B cell (primary cell): ENCODE measurements at regions of chr18 and their contacts with region 1.

Region 1: GRCh38 chr18:9614401-9615279 is at the start of gene PPP4R1:
- DNase-seq: peak; percentile 83
- ATAC-seq: peak; percentile 70
- H3K4me3 ChIP-seq: peak within 1 kb of the TSS; percentile 50 to 81 (median 67)
- H3K4me3 Mint-ChIP-seq: peak within 1 kb of the TSS; percentile 93
- H3K27ac ChIP-seq: peak within 1 kb of the TSS; percentile 75 to 76
- H3K27ac Mint-ChIP-seq: peak within 1 kb of the TSS; percentile 92
- H3K4me1 ChIP-seq: peaks cover 15 to 16% of the 10 kb centered on the region in 2 donors
- H3K4me1 Mint-ChIP-seq: peaks cover 24% of the 10 kb centered on the region
- H3K27me3 ChIP-seq: no peaks in the 10 kb centered on the region
- H3K27me3 Mint-ChIP-seq: no peaks in the 10 kb centered on the region
- CTCF ChIP-seq: no peak
- total RNA-seq, gene PPP4R1: 57.1 and 65.0 TPM in 2 replicates

Region 2: GRCh38 chr18:8608795-8609658 is 1005.6 kb before region 1 on chr18 and contains the start of gene RAB12:
- CTCF ChIA-PET with region 1: no interaction called
- POLR2A ChIA-PET with region 1: no interaction called
- intact Hi-C with region 1: loop called (anchors 10 kb)
- DNase-seq: peak; percentile 90
- ATAC-seq: peak; percentile 83
- H3K4me3 ChIP-seq: peak within 1 kb of the TSS; percentile 40 to 88 (median 76)
- H3K4me3 Mint-ChIP-seq: peak within 1 kb of the TSS; percentile 91
- H3K27ac ChIP-seq: peak within 1 kb of the TSS; percentile 42 to 72
- H3K27ac Mint-ChIP-seq: peak within 1 kb of the TSS; percentile 87
- H3K4me1 ChIP-seq: peaks cover 60 to 62% of the 10 kb centered on the region in 2 donors
- H3K4me1 Mint-ChIP-seq: peaks cover 72% of the 10 kb centered on the region
- H3K27me3 ChIP-seq: no peaks in the 10 kb centered on the region
- H3K27me3 Mint-ChIP-seq: no peaks in the 10 kb centered on the region
- CTCF ChIP-seq: peak; percentile 73
- total RNA-seq, gene RAB12: 38.7 and 40.9 TPM in 2 replicates

Region 3: DNA sequence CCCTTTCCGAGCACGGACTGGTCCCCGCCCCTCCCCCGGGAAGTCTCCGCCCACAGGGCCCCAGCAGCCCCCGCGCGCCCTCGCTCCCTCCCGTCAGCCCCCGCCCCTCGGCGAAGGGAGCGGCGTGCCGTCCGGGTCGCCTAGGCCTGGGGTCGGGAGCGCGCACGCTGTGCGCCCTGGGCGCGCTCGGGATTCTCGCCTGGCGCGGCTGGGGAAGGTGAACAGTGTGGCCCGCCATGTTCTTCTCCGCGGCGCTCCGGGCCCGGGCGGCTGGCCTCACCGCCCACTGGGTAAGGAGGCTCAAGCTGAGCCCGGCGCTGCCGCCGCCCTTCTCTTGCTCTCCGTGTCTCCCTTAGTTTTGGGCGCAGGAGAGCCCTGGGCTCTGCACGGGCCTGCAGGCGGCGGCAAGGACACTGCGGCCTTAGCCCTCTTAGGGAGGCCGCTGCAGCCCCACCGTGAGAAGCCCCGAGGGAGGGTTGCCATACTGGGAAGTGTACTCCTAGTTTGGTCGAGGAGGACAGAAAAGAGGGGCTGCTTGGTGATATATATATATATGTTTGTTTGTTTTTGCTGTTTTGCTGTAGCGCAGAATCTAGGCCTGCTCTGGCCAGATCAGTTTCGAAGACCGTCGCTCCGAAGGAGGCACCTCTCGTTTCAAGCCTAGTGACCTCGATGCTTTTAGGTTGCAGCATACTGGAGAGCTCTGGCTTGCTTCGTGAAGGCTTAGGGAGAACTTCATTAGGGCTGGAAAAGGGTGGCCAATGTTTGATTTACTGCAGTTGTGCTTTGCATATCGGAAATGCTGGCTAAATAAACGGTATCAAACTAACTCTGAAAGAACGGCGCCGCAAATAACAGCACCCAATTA is 511.9 kb before region 1 on chr18 and contains the start of gene NDUFV2:
- CTCF ChIA-PET with region 1: no interaction called
- POLR2A ChIA-PET with region 1: no interaction called
- intact Hi-C with region 1: loop called (anchors 2 kb)
- DNase-seq: peak; percentile 96
- ATAC-seq: peak; percentile 96
- H3K4me3 ChIP-seq: peak within 1 kb of the TSS; percentile 77 to 98 (median 88)
- H3K4me3 Mint-ChIP-seq: peak within 1 kb of the TSS; percentile 95
- H3K27ac ChIP-seq: peak within 1 kb of the TSS; percentile 80 to 86
- H3K27ac Mint-ChIP-seq: peak within 1 kb of the TSS; percentile 93
- H3K4me1 ChIP-seq: peaks cover 43 to 50% of the 10 kb centered on the region in 2 donors
- H3K4me1 Mint-ChIP-seq: peaks cover 54% of the 10 kb centered on the region
- H3K27me3 ChIP-seq: no peaks in the 10 kb centered on the region
- H3K27me3 Mint-ChIP-seq: no peaks in the 10 kb centered on the region
- CTCF ChIP-seq: no peak
- total RNA-seq, gene NDUFV2: 135 and 137 TPM in 2 replicates

Region 4: GRCh38 chr18:9334329-9334972 is 280.2 kb before region 1 on chr18 and contains the start of gene TWSG1:
- CTCF ChIA-PET with region 1: no interaction called
- POLR2A ChIA-PET with region 1: no interaction called
- intact Hi-C with region 1: loop called (anchors 2 kb)
- DNase-seq: peak; percentile 94
- ATAC-seq: peak; percentile 93
- H3K4me3 ChIP-seq: peak within 1 kb of the TSS; percentile 59 to 88 (median 71)
- H3K4me3 Mint-ChIP-seq: peak within 1 kb of the TSS; percentile 95
- H3K27ac ChIP-seq: peak within 1 kb of the TSS in 1 of 2 donors; percentile 65
- H3K27ac Mint-ChIP-seq: peak within 1 kb of the TSS; percentile 82
- H3K4me1 ChIP-seq: peaks cover 6 to 19% of the 10 kb centered on the region in 2 donors
- H3K4me1 Mint-ChIP-seq: peaks cover 20% of the 10 kb centered on the region
- H3K27me3 ChIP-seq: peaks cover 0 to 2% (median 0%) of the 10 kb centered on the region in 4 experiments
- H3K27me3 Mint-ChIP-seq: peaks cover 3% of the 10 kb centered on the region
- CTCF ChIP-seq: peak; percentile 44
- total RNA-seq, gene TWSG1: 5.5 and 6.3 TPM in 2 replicates

Region 5: DNA sequence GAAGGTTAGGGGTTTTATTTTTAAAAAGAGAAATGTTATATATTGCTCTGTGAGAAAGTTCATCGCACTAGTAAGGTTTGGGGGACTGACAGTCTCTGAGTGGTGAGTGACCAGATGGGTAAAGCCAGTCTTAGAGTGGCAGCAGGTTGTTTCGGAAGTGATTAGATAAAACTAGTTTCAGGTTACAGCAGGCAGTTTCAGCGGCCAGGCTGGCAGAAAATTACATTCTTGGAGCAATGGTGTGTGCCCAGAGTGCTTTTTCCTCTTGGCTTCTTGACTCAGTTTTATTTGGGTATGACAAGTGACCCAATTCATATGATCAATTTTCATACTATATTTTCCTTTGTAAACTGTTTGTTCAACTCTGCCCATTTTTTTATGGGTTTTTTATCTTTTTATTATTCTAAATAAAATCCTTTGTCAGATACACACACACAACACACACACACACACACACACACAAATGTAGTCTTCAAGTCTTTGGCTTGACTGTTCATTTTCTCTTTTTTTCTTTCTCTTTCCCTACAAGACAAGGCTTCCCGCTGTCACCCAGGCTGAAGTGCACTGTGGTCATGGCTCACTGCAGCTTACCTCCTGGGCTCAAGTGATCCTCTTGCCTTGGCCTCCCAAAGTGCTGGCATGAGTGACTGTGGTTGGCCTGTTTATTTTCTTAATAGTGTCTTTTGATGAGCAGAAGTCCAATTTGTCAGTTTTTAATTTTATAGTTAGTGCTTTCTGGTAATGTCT is 108.4 kb before region 1 on chr18:
- CTCF ChIA-PET with region 1: no interaction called
- POLR2A ChIA-PET with region 1: no interaction called
- intact Hi-C with region 1: no loop called
- DNase-seq: no peak
- ATAC-seq: no peak
- H3K4me3 ChIP-seq: no peak overlapping the region
- H3K4me3 Mint-ChIP-seq: no peak overlapping the region
- H3K27ac ChIP-seq: no peak overlapping the region
- H3K27ac Mint-ChIP-seq: no peak overlapping the region
- H3K4me1 ChIP-seq: no peaks in the 10 kb centered on the region
- H3K4me1 Mint-ChIP-seq: peaks cover 34% of the 10 kb centered on the region
- H3K27me3 ChIP-seq: no peaks in the 10 kb centered on the region
- H3K27me3 Mint-ChIP-seq: no peaks in the 10 kb centered on the region
- CTCF ChIP-seq: no peak

Region 6: GRCh38 chr18:9661564-9661963 is 46.9 kb after region 1 on chr18:
- CTCF ChIA-PET with region 1: no interaction called
- POLR2A ChIA-PET with region 1: no interaction called
- intact Hi-C with region 1: no loop called
- DNase-seq: no peak
- ATAC-seq: no peak
- H3K4me3 ChIP-seq: no peak overlapping the region
- H3K4me3 Mint-ChIP-seq: no peak overlapping the region
- H3K27ac ChIP-seq: no peak overlapping the region
- H3K27ac Mint-ChIP-seq: no peak overlapping the region
- H3K4me1 ChIP-seq: no peaks in the 10 kb centered on the region
- H3K4me1 Mint-ChIP-seq: no peaks in the 10 kb centered on the region
- H3K27me3 ChIP-seq: no peaks in the 10 kb centered on the region
- H3K27me3 Mint-ChIP-seq: no peaks in the 10 kb centered on the region
- CTCF ChIP-seq: no peak

Region 7: DNA sequence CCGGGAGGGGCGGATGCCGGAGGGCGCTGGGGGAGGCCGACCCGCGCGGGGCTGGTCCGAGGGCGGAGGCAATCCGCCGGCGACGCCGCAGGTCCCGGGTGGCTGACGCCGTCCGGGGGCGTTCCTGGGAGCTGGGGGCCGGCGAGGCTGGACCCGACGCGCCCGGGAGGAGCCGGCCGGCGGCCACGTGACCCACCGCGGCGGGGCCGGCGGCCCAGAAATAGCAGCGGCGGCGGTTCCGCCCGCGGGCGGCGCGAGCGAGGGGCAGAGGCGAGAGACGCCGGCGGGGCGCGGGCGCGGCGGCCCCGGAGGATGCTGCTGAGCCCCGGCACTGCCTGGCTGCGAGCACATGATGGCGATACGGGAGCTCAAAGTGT is 93.4 kb after region 1 on chr18 and contains the start of gene RAB31:
- CTCF ChIA-PET with region 1: interaction called, 6 read pairs
- POLR2A ChIA-PET with region 1: interaction called, 5 read pairs
- intact Hi-C with region 1: loop called (anchors 1 kb)
- DNase-seq: peak; percentile 71
- ATAC-seq: peak; percentile 57
- H3K4me3 ChIP-seq: peak within 1 kb of the TSS; percentile 63 to 83 (median 72)
- H3K4me3 Mint-ChIP-seq: peak within 1 kb of the TSS; percentile 97
- H3K27ac ChIP-seq: peak within 1 kb of the TSS; percentile 76
- H3K27ac Mint-ChIP-seq: peak within 1 kb of the TSS; percentile 95
- H3K4me1 ChIP-seq: peaks cover 39 to 48% of the 10 kb centered on the region in 2 donors
- H3K4me1 Mint-ChIP-seq: peaks cover 49% of the 10 kb centered on the region
- H3K27me3 ChIP-seq: peaks cover 0 to 22% (median 0%) of the 10 kb centered on the region in 4 experiments
- H3K27me3 Mint-ChIP-seq: no peaks in the 10 kb centered on the region
- CTCF ChIP-seq: no peak
- total RNA-seq, gene RAB31: 38.5 and 44.6 TPM in 2 replicates

Region 8: DNA sequence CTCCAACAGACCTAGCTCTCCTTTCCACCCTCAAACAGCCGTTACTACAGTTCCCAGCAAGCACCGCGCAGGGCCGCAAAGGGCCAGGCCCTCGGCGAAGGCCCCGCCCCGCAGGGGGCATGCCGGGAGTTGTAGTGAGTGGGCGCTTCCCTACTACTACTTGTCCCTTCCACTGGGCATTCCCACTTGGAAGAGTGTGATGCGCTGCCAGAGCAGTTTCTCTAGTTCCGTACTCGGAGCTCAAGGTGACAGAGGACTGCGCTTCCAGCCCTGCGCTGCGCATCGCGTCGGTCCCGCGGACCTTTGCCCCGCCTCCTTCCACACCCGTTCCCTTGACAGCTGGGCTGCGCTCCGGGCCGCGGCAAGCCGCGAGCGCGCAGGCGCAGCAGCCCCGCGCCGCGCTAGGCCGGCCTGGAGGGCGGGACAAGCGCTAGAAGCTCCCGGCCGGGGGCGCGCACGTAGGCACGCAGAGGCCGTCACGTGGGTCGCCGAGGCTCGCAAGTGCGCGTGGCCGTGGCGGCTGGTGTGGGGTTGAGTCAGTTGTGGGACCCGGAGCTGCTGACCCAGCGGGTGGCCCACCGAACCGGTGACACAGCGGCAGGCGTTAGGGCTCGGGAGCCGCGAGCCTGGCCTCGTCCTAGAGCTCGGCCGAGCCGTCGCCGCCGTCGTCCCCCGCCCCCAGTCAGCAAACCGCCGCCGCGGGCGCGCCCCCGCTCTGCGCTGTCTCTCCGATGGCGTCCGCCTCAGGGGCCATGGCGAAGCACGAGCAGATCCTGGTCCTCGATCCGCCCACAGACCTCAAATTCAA is 299.1 kb after region 1 on chr18 and contains the start of gene VAPA:
- CTCF ChIA-PET with region 1: interaction called, 9 read pairs
- POLR2A ChIA-PET with region 1: interaction called, 4 read pairs
- intact Hi-C with region 1: loop called (anchors 1 kb)
- DNase-seq: peak; percentile 99
- ATAC-seq: peak; percentile 80
- H3K4me3 ChIP-seq: peak within 1 kb of the TSS; percentile 78 to 90 (median 89)
- H3K4me3 Mint-ChIP-seq: peak within 1 kb of the TSS; percentile 94
- H3K27ac ChIP-seq: peak within 1 kb of the TSS; percentile 89 to 95
- H3K27ac Mint-ChIP-seq: peak within 1 kb of the TSS; percentile 96
- H3K4me1 ChIP-seq: peaks cover 30 to 35% of the 10 kb centered on the region in 2 donors
- H3K4me1 Mint-ChIP-seq: peaks cover 26% of the 10 kb centered on the region
- H3K27me3 ChIP-seq: peaks cover 0 to 4% (median 2%) of the 10 kb centered on the region in 4 experiments
- H3K27me3 Mint-ChIP-seq: peaks cover 9% of the 10 kb centered on the region
- CTCF ChIP-seq: no peak
- total RNA-seq, gene VAPA: 109 and 117 TPM in 2 replicates